ENCODE measurements at regions of chr3 and their contacts with region 1.

Region 1: GRCh38 chr3:171772427-171773056 is 37.7 kb downstream of the PLD1 start:
- DNase-seq: peak; percentile 58
- CTCF ChIP-seq: peak; percentile 72

Region 2: DNA sequence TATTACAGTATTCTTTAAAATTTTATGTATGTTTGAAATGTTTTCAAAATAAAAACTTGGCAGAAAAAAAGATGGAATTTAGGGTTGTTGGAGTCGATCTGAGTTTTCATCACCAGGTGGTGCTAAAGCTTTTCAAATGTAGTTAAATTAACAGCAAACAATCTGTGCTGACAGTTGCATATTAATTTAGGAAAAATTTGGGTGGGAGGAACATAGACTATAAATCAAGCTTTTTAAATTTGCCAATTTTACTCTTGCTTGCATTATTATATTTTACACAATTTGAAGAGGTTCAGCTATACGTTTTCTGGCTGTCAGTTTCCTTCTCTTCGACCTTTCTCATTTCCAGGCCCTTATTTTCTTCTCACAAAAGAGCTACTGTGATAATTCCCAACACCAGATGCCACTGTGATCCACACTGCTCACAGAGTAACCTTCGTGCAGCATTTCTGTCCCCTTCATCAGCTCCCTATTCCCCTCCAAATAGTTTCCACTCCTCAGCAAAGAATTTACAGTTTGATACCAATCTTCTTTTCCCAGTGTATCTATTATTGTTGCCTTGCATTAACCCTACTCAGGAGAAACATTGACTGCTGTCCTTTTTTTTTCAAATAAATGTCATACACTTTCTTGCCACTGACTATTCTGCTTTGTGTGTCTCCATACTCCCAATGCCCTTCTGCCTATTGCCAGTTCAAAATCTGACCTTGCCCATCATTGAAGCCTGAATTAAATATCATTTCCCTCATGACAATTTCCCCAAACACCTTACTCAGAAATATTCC is 810.7 kb before region 1 on chr3:
- CTCF ChIA-PET with region 1: interaction called, 28 read pairs
- POLR2A ChIA-PET with region 1: no interaction called
- DNase-seq: no peak
- CTCF ChIP-seq: peak; percentile 37

Region 3: DNA sequence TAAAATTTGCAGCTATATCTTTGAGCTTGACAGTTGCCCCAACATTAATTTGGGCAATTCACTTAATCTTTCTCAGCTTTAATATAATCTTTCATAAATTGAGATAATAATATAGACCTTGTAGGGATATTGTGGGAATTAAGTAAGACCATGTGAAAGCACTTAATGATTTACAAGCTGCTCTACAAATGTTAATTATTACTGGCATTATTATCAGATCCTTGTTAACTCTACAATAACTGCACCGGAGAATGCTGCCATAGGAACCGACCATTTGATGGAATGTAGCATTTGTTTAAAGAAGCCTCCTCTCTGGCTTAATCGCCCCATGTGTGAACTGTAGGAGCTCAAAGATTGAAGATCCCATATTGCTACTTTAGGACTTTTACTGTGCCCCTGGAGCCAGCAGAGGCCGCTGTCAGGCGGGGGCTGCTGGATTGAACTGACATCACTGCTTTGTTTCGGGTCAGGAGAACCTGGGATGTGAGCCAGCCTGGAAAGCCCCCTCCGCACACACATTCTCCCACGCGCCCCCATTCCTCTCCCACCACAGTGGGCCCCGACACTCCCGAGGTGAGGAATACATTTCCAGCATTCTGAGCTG is 158.1 kb before region 1 on chr3:
- CTCF ChIA-PET with region 1: interaction called, 30 read pairs
- POLR2A ChIA-PET with region 1: no interaction called
- DNase-seq: peak; percentile 35
- CTCF ChIP-seq: peak; percentile 61

Region 4: DNA sequence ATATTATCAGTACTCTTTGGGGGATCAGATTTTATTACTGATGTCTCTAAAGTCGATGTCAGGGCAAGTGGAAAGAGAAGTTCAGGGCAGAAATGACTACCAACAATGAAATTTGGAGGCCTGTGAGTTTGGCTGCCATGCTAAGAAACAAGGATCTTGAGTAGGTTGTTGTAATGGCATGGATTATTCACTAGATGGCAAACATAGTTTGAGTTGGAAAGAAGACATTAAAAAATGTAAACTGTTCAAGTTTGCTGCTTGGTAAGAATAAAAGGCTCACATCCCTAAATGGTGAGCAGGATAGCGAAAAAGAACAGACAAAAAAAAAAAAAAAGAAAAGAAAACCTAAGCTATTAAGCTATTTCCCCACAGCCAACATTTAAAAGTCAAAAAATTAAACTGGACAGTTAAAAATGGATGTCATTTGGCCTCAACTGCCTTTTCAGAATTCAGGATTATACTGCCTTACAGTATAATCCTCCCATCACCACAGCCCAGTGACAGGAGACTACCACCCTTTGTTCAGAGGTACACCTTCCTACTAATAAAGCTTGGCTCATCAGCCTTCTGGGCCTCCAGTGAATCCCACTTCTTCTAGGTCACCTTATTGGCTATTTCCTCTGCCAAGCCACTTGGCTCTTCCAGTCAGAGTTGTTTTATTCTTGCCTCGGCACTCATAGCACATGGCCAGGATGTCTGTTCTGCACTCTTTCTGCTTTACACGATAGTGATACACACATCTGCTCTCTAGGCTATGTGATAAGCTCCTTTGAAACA is 126.0 kb before region 1 on chr3:
- CTCF ChIA-PET with region 1: interaction called, 39 read pairs
- POLR2A ChIA-PET with region 1: no interaction called
- DNase-seq: peak; percentile 52
- CTCF ChIP-seq: peak; percentile 56

Region 5: GRCh38 chr3:171755015-171755589 is 17.4 kb before region 1 on chr3:
- CTCF ChIA-PET with region 1: interaction called, 16 read pairs
- POLR2A ChIA-PET with region 1: no interaction called
- DNase-seq: no peak
- CTCF ChIP-seq: no peak

Region 6: GRCh38 chr3:171806200-171807128 is 33.9 kb after region 1 on chr3:
- CTCF ChIA-PET with region 1: interaction called, 10 read pairs
- POLR2A ChIA-PET with region 1: no interaction called
- DNase-seq: no peak
- CTCF ChIP-seq: no peak

Region 7: GRCh38 chr3:173711593-173711992 is 1939.1 kb after region 1 on chr3:
- CTCF ChIA-PET with region 1: no interaction called
- POLR2A ChIA-PET with region 1: no interaction called
- DNase-seq: no peak
- CTCF ChIP-seq: no peak

Measured in GM10248 (cell line).